CD8-positive, alpha-beta T cell (primary cell): ENCODE measurements at regions of chr3 and their contacts with region 1.

Region 1: GRCh38 chr3:118884748-118885206 is 149.9 kb downstream of the IGSF11 start:
- DNase-seq: peak; percentile 50 to 85 (median 76)
- ATAC-seq: peak; percentile 86
- H3K4me3 ChIP-seq: no peak overlapping the region
- H3K4me3 Mint-ChIP-seq: no peak overlapping the region
- H3K27ac ChIP-seq: no peak overlapping the region
- H3K27ac Mint-ChIP-seq: no peak overlapping the region
- H3K4me1 ChIP-seq: no peaks in the 10 kb centered on the region
- H3K4me1 Mint-ChIP-seq: peaks cover 7% of the 10 kb centered on the region
- H3K27me3 ChIP-seq: peaks cover 0 to 3% of the 10 kb centered on the region in 2 experiments
- H3K27me3 Mint-ChIP-seq: peaks cover 21% of the 10 kb centered on the region
- CTCF ChIP-seq: peak; percentile 99

Region 2: DNA sequence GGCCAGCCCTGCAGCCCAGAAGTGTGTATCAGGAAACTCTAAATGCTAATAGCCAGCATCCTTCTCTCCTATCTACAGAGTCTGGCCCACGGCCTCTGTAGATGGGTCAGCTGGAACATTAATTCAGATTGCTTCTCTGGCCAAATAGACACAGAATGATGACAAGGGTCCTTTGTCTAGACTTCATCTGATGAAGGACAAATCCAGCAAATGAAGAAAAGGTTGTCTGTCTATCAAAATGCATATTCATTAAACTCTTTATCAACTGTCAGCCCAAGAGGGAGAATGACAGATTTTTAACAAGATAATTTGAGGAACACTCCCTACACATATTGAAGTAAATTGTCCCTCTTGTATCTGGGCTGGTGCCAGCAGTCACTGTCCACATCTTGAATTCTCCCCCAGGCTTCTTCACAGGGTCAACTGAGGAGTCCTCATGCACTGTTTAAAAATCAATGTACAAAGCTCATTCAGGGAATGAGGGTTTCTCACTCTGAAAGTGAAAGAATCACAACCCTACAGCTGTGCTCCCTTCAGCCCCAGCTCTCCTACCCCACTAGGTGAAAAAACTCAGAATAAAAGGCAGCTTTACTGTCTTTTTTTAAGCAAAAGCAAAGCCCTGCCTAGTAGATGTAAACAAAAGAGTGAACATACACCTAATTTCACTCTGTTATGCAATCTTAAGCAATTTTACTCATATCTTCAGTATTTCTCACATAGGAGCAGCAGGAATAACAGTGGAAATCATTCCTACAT is 357.8 kb before region 1 on chr3:
- CTCF ChIA-PET with region 1: no interaction called
- POLR2A ChIA-PET with region 1: no interaction called
- intact Hi-C with region 1: no loop called
- DNase-seq: no peak
- ATAC-seq: no peak
- H3K4me3 ChIP-seq: no peak overlapping the region
- H3K4me3 Mint-ChIP-seq: no peak overlapping the region
- H3K27ac ChIP-seq: no peak overlapping the region
- H3K27ac Mint-ChIP-seq: no peak overlapping the region
- H3K4me1 ChIP-seq: no peaks in the 10 kb centered on the region
- H3K4me1 Mint-ChIP-seq: no peaks in the 10 kb centered on the region
- H3K27me3 ChIP-seq: no peaks in the 10 kb centered on the region
- H3K27me3 Mint-ChIP-seq: no peaks in the 10 kb centered on the region
- CTCF ChIP-seq: no peak

Region 3: DNA sequence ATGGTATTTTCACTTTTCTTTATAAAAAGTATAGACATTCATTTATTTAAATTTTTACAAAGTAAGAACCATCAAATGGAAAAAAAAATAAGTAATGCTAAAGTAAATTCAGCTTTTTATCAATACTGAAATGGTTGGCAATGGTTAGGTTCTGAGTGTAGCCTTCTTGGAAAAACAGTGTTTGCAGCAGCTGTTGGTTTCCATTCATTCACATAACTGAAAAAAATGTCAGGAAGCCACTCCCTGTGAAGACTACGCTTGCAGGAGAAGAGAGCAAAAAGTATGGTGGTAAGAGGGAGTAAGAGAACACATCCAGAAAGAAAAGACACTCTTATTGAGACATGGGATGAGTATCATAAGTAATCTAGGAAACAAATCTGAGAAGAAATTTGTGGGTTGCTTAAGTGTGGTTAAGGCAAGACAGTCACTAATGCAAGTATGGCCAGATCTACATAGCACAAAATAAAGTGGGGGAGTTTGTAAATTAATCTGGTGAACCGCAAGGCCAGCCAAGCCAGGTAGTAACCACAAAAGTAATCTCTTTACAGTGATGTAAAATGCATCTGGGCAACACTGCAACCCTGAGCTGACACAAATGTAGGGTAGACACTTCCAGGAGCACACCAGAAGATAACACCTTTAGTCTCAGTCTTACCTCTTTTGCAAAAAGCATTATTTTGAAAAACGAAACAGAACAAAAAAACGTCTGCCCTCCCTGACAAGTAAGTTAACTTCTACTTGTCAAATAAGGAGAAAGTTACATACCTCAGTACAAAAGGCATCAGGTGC is 16.2 kb after region 1 on chr3:
- CTCF ChIA-PET with region 1: interaction called, 10 read pairs
- POLR2A ChIA-PET with region 1: no interaction called
- intact Hi-C with region 1: no loop called
- DNase-seq: peak in 1 of 9 experiments; percentile 12
- ATAC-seq: no peak
- H3K4me3 ChIP-seq: no peak overlapping the region
- H3K4me3 Mint-ChIP-seq: no peak overlapping the region
- H3K27ac ChIP-seq: no peak overlapping the region
- H3K27ac Mint-ChIP-seq: no peak overlapping the region
- H3K4me1 ChIP-seq: no peaks in the 10 kb centered on the region
- H3K4me1 Mint-ChIP-seq: peaks cover 8% of the 10 kb centered on the region
- H3K27me3 ChIP-seq: no peaks in the 10 kb centered on the region
- H3K27me3 Mint-ChIP-seq: no peaks in the 10 kb centered on the region
- CTCF ChIP-seq: no peak

Region 4: GRCh38 chr3:118960876-118961450 is 76.2 kb after region 1 on chr3:
- CTCF ChIA-PET with region 1: interaction called, 19 read pairs
- POLR2A ChIA-PET with region 1: no interaction called
- intact Hi-C with region 1: no loop called
- DNase-seq: no peak
- ATAC-seq: no peak
- H3K4me3 ChIP-seq: no peak overlapping the region
- H3K4me3 Mint-ChIP-seq: no peak overlapping the region
- H3K27ac ChIP-seq: no peak overlapping the region
- H3K27ac Mint-ChIP-seq: no peak overlapping the region
- H3K4me1 ChIP-seq: peaks cover 21% of the 10 kb centered on the region
- H3K4me1 Mint-ChIP-seq: peaks cover 22% of the 10 kb centered on the region
- H3K27me3 ChIP-seq: no peaks in the 10 kb centered on the region
- H3K27me3 Mint-ChIP-seq: no peaks in the 10 kb centered on the region
- CTCF ChIP-seq: no peak

Region 5: DNA sequence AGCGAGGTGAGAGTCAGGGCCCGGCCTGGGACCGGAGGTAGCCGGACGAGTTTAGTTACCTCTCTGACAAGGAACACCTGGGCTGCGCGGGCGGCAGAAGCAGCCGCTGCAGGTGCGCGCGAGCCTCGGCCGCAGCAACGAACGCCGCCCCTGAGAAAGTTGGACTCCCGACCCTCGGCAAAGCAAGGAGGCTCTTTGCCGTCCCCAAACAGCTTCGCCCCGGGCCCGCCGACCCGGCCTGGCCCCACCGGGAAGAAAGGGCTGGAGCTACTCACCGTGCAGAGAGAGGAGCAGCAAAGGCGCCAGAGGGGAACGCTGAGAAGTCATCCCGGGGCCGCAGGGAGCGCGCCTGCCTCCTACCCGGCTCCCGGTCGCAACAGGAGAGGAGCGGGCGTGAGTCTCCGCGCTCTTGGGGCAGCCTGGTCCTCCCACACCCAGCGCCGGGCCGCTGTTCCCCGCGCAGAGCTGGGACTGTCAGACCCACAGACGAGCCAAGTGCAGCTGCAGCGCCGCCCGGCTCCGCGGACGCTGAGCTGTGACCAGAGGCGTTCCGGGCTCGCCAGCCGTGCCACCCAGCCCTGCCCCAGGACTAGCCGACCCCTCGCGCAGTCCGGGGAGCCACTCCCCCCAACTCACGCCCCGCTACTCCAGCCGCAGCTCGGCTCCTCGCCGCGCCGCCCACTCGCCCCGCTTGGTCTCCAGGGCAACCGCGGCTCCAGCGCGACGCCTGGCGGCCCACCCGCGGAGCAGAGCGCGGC is 149.7 kb after region 1 on chr3 and contains the start of gene IGSF11:
- CTCF ChIA-PET with region 1: interaction called, 362 read pairs
- POLR2A ChIA-PET with region 1: interaction called, 24 read pairs
- intact Hi-C with region 1: loop called (anchors 1 kb)
- DNase-seq: peak; percentile 33 to 81 (median 64)
- ATAC-seq: peak; percentile 89
- H3K4me3 ChIP-seq: peak within 1 kb of the TSS; percentile 58 to 64
- H3K4me3 Mint-ChIP-seq: peak within 1 kb of the TSS; percentile 90
- H3K27ac ChIP-seq: peak within 1 kb of the TSS in 1 of 2 experiments; percentile 22
- H3K27ac Mint-ChIP-seq: no peak within 1 kb of the TSS
- H3K4me1 ChIP-seq: peaks cover 6% of the 10 kb centered on the region
- H3K4me1 Mint-ChIP-seq: peaks cover 15% of the 10 kb centered on the region
- H3K27me3 ChIP-seq: peaks cover 0 to 14% of the 10 kb centered on the region in 2 experiments
- H3K27me3 Mint-ChIP-seq: peaks cover 29% of the 10 kb centered on the region
- CTCF ChIP-seq: peak; percentile 67
- total RNA-seq, gene IGSF11: 0.57 to 0.86 TPM

Region 6: DNA sequence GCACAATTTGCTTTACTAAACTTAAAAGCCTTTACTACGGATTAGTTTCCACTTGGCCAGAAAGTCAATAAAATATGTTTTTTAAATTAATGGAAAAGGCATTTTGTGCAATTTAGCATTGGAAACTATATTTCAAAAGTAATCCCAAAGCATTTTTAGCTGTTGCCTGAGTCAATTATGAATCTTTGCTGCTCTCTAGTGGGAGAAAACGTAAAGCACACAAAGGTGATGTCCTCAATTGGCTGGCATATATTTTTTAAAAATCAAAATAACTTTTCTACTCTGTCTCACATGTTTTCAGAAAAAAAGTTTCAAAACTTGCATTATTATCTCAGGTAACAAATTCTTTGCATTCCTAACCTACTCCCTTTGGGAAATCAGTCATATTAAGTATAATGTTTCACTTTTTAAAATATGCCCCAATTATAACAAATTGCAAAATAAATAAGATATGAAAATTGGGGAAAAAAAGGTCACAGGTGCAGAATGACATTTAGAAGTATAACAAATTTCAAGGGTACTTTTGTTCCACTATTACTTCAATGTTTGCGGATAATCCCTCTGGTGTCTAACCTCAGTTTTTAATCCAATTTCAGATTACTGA is 213.9 kb after region 1 on chr3:
- CTCF ChIA-PET with region 1: interaction called, 310 read pairs
- POLR2A ChIA-PET with region 1: interaction called, 6 read pairs
- intact Hi-C with region 1: loop called (anchors 1 kb)
- DNase-seq: peak in 3 of 9 experiments; percentile 11 to 64 (median 57)
- ATAC-seq: no peak
- H3K4me3 ChIP-seq: no peak overlapping the region
- H3K4me3 Mint-ChIP-seq: no peak overlapping the region
- H3K27ac ChIP-seq: no peak overlapping the region
- H3K27ac Mint-ChIP-seq: no peak overlapping the region
- H3K4me1 ChIP-seq: no peaks in the 10 kb centered on the region
- H3K4me1 Mint-ChIP-seq: no peaks in the 10 kb centered on the region
- H3K27me3 ChIP-seq: no peaks in the 10 kb centered on the region
- H3K27me3 Mint-ChIP-seq: peaks cover 5% of the 10 kb centered on the region
- CTCF ChIP-seq: peak; percentile 90

Region 7: DNA sequence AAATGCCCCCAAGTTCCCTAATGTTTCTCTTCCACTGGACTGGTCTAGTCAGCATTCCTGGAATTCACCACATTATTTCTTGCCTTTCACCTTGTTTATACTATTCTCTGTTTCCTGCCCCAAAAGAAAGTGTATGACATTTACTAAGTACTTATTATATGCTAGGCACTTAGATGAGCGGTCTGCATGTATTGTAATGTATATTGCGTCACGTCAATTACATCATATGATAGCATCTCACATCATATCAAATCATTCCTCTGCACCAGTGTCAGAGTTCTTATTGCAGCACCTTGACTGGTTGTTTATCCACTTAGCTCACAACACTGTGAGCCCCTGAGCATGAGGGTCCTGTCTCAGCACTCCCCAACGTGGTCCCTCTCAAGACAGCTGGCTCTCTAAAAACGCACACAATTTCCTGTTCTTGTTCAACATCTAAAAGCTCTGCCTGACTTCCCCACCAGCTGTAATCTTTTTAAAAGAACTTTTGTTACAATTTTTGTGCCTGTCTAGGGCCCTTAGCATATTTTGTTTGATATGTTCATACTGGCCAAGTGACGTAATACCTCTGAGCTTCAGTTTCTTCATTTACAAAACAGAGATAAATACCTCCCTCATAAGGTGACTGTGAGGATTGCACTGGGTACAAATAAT is 468.2 kb after region 1 on chr3:
- CTCF ChIA-PET with region 1: interaction called, 8 read pairs
- POLR2A ChIA-PET with region 1: no interaction called
- intact Hi-C with region 1: loop called (anchors 1 to 5 kb)
- DNase-seq: peak in 3 of 9 experiments; percentile 20 to 76 (median 61)
- ATAC-seq: peak; percentile 80
- H3K4me3 ChIP-seq: no peak overlapping the region
- H3K4me3 Mint-ChIP-seq: no peak overlapping the region
- H3K27ac ChIP-seq: no peak overlapping the region
- H3K27ac Mint-ChIP-seq: peak overlapping the region; percentile 8
- H3K4me1 ChIP-seq: peaks cover 20% of the 10 kb centered on the region
- H3K4me1 Mint-ChIP-seq: peaks cover 20% of the 10 kb centered on the region
- H3K27me3 ChIP-seq: no peaks in the 10 kb centered on the region
- H3K27me3 Mint-ChIP-seq: no peaks in the 10 kb centered on the region
- CTCF ChIP-seq: peak; percentile 63